H1 (cell line): ENCODE measurements at regions of chr3 and their contacts with region 1.

Region 1: GRCh38 chr3:98612587-98612986 is 19.2 kb upstream of the CPOX start:
- DNase-seq: peak; percentile 38 to 69
- H3K4me3 ChIP-seq: no peak overlapping the region
- H3K27ac ChIP-seq: no peak overlapping the region
- H3K4me1 ChIP-seq: no peaks in the 10 kb centered on the region
- H3K27me3 ChIP-seq: no peaks in the 10 kb centered on the region
- CTCF ChIP-seq: peak; percentile 2 to 71 (median 56)
- EP300 ChIP-seq: no peak
- POLR2A ChIP-seq: no peak
- RAD21 ChIP-seq: peak; percentile 43 to 46; a peak in 3 of 4 replicates

Region 2: DNA sequence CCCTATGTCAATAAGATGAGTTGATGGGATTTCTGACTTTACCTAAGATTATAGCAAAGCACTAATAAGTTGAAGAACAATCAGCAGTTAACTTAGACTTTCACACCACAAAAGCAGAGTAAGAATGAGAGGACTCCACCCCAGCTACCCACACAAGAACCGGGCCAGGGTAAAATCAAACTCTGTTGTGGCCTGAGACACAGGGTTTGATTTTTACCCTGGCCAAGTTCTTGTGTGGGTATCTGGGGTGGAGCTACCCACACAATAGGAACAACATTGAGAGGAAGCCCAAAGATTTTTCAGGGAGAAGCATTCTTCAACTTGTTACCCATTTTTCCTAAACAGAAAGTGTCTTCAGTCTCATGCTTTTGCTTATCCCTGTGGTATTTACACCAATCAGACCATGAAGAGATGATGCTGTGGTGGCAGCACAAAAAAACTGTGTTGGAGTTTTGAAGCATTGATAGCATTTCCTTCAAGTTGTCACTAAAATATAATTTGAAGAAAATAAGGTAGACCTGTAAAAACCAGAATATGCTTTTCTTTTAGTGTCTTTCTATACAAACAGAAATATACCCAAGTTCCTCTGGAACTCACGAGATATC is 44.8 kb before region 1 on chr3:
- CTCF ChIA-PET with region 1: no interaction called
- POLR2A ChIA-PET with region 1: no interaction called
- DNase-seq: no peak
- H3K4me3 ChIP-seq: no peak overlapping the region
- H3K27ac ChIP-seq: no peak overlapping the region
- H3K4me1 ChIP-seq: no peaks in the 10 kb centered on the region
- H3K27me3 ChIP-seq: no peaks in the 10 kb centered on the region
- CTCF ChIP-seq: no peak
- EP300 ChIP-seq: no peak
- POLR2A ChIP-seq: no peak
- RAD21 ChIP-seq: no peak

Region 3: DNA sequence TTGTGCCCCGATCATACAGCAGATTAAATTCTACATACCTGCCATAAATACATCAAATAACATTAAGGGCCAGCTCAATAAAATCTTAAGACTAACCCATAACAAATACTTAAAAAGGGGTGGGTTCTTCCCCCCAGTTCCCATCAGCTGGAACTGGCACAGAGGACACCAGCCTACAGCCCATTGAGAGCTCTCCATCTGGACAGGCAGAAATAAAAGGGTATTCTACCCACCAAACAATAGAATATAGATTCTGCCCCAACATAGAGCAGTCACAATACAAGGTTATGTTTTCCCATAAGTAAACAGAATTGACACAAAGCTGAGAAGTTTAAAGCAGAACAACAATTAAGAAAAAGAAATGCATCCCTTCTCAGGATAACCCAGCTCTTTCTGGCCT is 31.1 kb before region 1 on chr3:
- CTCF ChIA-PET with region 1: no interaction called
- POLR2A ChIA-PET with region 1: no interaction called
- DNase-seq: no peak
- H3K4me3 ChIP-seq: no peak overlapping the region
- H3K27ac ChIP-seq: no peak overlapping the region; the same call in 1 of the 2 replicates
- H3K4me1 ChIP-seq: peaks cover 0 to 5% (median 2%) of the 10 kb centered on the region in 4 experiments; a peak in 1 of 7 replicates
- H3K27me3 ChIP-seq: no peaks in the 10 kb centered on the region
- CTCF ChIP-seq: no peak
- EP300 ChIP-seq: no peak
- POLR2A ChIP-seq: no peak
- RAD21 ChIP-seq: no peak

Region 4: DNA sequence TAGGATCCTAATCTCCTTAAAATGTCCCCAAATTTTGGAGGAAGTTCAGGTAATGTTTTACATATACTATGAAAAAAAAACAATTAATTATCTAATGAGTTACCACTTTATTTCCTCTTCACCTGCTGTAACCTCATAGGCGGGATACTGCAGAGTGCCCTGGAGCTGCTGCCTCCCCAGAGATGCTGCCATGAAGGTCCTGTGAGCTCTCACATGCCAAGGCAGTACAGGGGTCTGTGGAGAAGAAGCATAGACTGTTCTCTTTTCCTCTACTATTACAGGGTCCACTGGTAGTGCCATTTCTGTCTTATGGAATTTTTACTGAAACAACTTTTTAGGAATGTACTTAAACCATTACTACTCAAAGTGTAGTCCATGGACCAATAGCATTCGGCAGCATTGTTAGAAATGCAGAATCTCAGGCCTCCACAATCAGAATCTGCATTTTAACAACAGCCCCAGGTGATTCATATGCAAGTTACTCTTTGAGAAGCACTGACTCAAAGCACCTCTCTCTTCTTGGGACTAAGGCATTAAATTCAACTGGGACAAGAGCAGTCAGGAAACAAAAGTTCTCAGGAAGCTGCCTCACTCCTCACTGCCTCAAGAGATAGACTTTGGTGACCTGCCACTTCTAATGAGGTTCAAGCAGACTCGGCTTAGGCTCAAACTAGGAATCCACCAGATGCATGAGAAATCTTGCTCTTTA is 11.1 kb after region 1 on chr3:
- CTCF ChIA-PET with region 1: interaction called, 25 read pairs
- POLR2A ChIA-PET with region 1: no interaction called
- DNase-seq: no peak
- H3K4me3 ChIP-seq: peak overlapping the region in 1 of 4 experiments; percentile 9; a peak in 1 of 8 replicates
- H3K27ac ChIP-seq: no peak overlapping the region
- H3K4me1 ChIP-seq: peaks cover 0 to 14% (median 7%) of the 10 kb centered on the region in 4 experiments; a peak in 2 of 7 replicates
- H3K27me3 ChIP-seq: no peaks in the 10 kb centered on the region
- CTCF ChIP-seq: no peak
- EP300 ChIP-seq: no peak
- POLR2A ChIP-seq: no peak
- RAD21 ChIP-seq: no peak

Region 5: GRCh38 chr3:98657457-98657856 is 44.9 kb after region 1 on chr3:
- CTCF ChIA-PET with region 1: interaction called, 14 read pairs
- POLR2A ChIA-PET with region 1: no interaction called
- DNase-seq: peak; percentile 21 to 72
- H3K4me3 ChIP-seq: peak overlapping the region in 3 of 4 experiments; percentile 24 to 34 (median 29); a peak in 3 of 8 replicates
- H3K27ac ChIP-seq: no peak overlapping the region
- H3K4me1 ChIP-seq: no peaks in the 10 kb centered on the region
- H3K27me3 ChIP-seq: no peaks in the 10 kb centered on the region; a peak in 2 of 7 replicates
- CTCF ChIP-seq: peak; percentile 75 to 89 (median 88)
- EP300 ChIP-seq: no peak
- POLR2A ChIP-seq: no peak
- RAD21 ChIP-seq: peak; percentile 74 to 85

Region 6: GRCh38 chr3:98809557-98809956 is 197.0 kb after region 1 on chr3:
- CTCF ChIA-PET with region 1: interaction called, 13 read pairs
- POLR2A ChIA-PET with region 1: no interaction called
- DNase-seq: no peak
- H3K4me3 ChIP-seq: no peak overlapping the region
- H3K27ac ChIP-seq: no peak overlapping the region
- H3K4me1 ChIP-seq: no peaks in the 10 kb centered on the region
- H3K27me3 ChIP-seq: no peaks in the 10 kb centered on the region
- CTCF ChIP-seq: no peak
- EP300 ChIP-seq: no peak
- POLR2A ChIP-seq: no peak
- RAD21 ChIP-seq: no peak

Region 7: DNA sequence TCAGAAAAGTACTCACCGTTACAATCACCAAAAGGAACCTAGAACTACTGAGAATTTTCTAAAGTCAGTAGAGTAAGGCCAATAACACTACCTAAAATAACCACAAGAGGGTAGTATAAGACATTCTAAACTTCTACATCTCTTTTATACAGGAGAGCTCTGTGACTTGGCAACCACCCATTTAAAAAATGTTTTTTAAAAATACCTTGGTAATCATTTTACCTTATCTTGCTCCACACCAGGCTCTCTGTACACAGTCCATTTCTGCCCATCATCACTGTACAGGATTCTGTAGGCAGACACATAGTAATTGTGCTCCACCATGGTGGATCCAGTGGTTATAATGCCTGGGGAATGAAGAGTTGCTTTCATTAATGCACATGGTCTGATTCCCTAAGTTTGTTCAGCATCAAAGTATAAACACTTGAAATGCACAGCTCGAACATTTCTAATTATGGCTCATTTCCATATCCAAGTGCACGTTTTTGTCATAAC is 205.0 kb after region 1 on chr3:
- CTCF ChIA-PET with region 1: interaction called, 13 read pairs
- POLR2A ChIA-PET with region 1: no interaction called
- DNase-seq: no peak
- H3K4me3 ChIP-seq: no peak overlapping the region
- H3K27ac ChIP-seq: no peak overlapping the region
- H3K4me1 ChIP-seq: no peaks in the 10 kb centered on the region; a peak in 1 of 7 replicates
- H3K27me3 ChIP-seq: no peaks in the 10 kb centered on the region
- CTCF ChIP-seq: peak in 2 of 3 experiments; percentile 22 to 60; a peak in 2 of 4 replicates
- EP300 ChIP-seq: no peak
- POLR2A ChIP-seq: no peak
- RAD21 ChIP-seq: peak; percentile 64